ENCODE measurements at regions of chr1 and their contacts with region 1.

Region 1: DNA sequence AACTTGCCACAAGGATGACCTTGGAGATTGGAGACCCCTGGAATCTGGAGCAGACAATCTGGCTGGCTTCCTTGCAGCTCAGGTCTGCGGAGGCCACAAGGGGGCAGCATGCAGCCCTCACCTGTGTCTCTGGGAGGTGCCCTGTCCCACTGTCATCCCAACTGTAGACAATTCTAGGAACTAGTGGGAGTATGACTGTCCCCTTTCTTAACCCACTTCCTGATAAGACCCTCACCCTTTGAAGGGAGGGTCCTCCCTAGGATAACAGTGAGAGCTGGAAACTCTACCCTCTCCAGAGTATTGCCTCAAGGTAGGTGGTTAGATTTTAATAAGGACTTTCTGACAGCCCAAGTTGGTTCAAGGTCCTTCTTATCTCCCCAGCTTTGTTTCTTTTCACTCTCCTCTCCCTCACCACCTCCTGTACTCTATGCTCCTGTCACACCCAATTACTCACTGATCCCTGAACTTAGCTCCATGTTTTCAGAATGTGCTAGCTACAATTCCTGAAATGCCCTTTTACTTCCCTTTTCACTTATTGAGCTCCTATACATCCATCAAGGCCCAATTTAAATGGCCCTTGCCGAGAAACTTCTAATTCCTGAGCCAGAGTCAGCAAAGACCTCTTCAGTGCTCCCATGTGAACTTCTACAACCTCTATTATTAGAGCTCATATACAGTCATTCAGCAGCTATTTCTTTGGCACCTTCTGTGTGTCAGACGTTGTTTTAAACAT is 9.2 kb upstream of the KCNQ4 start:
- DNase-seq: peak; percentile 82
- ATAC-seq: peak; percentile 87
- H3K4me3 Mint-ChIP-seq: no peak overlapping the region
- H3K27ac Mint-ChIP-seq: peak overlapping the region; percentile 39
- H3K4me1 Mint-ChIP-seq: peaks cover 3% of the 10 kb centered on the region
- H3K27me3 Mint-ChIP-seq: no peaks in the 10 kb centered on the region
- CTCF ChIP-seq: peak; percentile 87

Region 2: GRCh38 chr1:40638097-40639036 is 136.1 kb before region 1 on chr1:
- CTCF ChIA-PET with region 1: no interaction called
- POLR2A ChIA-PET with region 1: no interaction called
- intact Hi-C with region 1: no loop called
- DNase-seq: no peak
- ATAC-seq: no peak
- H3K4me3 Mint-ChIP-seq: no peak overlapping the region
- H3K27ac Mint-ChIP-seq: no peak overlapping the region
- H3K4me1 Mint-ChIP-seq: peaks cover 23% of the 10 kb centered on the region
- H3K27me3 Mint-ChIP-seq: no peaks in the 10 kb centered on the region
- CTCF ChIP-seq: no peak

Region 3: DNA sequence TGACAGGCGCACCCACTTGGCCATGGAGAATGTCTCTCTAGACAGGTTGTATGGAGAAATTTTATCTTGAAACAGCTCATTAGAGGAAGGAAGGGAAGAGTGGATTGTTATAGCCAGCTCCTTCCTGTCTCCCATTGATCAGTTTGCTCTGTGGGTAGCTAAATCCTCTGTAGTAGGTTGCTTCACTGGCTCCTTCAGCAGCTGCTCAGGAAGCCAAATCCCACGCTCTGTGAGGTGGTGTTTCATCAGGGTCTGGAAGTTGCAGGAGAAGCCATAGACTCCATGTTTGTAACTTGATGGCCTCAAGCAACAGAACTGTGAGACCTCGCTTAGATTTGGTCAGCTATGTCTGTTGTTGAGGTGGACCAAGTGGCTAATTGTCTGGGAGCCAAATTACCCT is 89.8 kb before region 1 on chr1:
- CTCF ChIA-PET with region 1: interaction called, 23 read pairs
- POLR2A ChIA-PET with region 1: no interaction called
- intact Hi-C with region 1: no loop called
- DNase-seq: no peak
- ATAC-seq: no peak
- H3K4me3 Mint-ChIP-seq: no peak overlapping the region
- H3K27ac Mint-ChIP-seq: no peak overlapping the region
- H3K4me1 Mint-ChIP-seq: peaks cover 2% of the 10 kb centered on the region
- H3K27me3 Mint-ChIP-seq: no peaks in the 10 kb centered on the region
- CTCF ChIP-seq: no peak

Region 4: GRCh38 chr1:40755067-40755466 is 19.4 kb before region 1 on chr1:
- CTCF ChIA-PET with region 1: interaction called, 90 read pairs
- POLR2A ChIA-PET with region 1: no interaction called
- intact Hi-C with region 1: no loop called
- DNase-seq: no peak
- ATAC-seq: no peak
- H3K4me3 Mint-ChIP-seq: no peak overlapping the region
- H3K27ac Mint-ChIP-seq: no peak overlapping the region
- H3K4me1 Mint-ChIP-seq: peaks cover 30% of the 10 kb centered on the region
- H3K27me3 Mint-ChIP-seq: no peaks in the 10 kb centered on the region
- CTCF ChIP-seq: no peak

Region 5: DNA sequence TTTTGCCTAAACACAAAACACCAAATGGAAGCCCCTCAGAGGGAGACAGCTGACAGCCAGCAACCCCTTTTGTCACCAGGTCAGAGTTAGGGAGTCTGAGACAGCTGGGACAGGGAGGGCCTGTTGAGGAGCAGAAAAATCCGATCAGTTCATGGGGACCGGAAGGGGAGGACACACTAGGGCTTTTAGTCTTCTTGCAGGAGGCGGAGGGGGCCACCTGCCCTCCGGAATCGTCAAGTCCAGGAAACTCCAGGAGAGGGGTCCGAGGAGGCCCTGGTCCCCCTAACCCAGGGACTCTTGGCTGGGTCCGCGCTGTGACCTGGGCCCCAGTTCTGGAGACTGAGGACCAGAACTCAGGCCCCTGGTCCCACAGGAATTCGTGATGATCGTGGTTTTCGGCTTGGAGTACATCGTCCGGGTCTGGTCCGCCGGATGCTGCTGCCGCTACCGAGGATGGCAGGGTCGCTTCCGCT is 43.4 kb after region 1 on chr1:
- CTCF ChIA-PET with region 1: interaction called, 14 read pairs
- POLR2A ChIA-PET with region 1: no interaction called
- intact Hi-C with region 1: no loop called
- DNase-seq: no peak
- ATAC-seq: no peak
- H3K4me3 Mint-ChIP-seq: peak overlapping the region; percentile 72
- H3K27ac Mint-ChIP-seq: peak overlapping the region; percentile 25
- H3K4me1 Mint-ChIP-seq: peaks cover 11% of the 10 kb centered on the region
- H3K27me3 Mint-ChIP-seq: peaks cover 3% of the 10 kb centered on the region
- CTCF ChIP-seq: no peak

Region 6: GRCh38 chr1:40849801-40850592 is 75.6 kb after region 1 on chr1:
- CTCF ChIA-PET with region 1: interaction called, 169 read pairs
- POLR2A ChIA-PET with region 1: interaction called, 9 read pairs
- intact Hi-C with region 1: loop called (anchors 2 kb)
- DNase-seq: peak; percentile 85
- ATAC-seq: peak; percentile 92
- H3K4me3 Mint-ChIP-seq: peak overlapping the region; percentile 22
- H3K27ac Mint-ChIP-seq: peak overlapping the region; percentile 49
- H3K4me1 Mint-ChIP-seq: peaks cover 12% of the 10 kb centered on the region
- H3K27me3 Mint-ChIP-seq: no peaks in the 10 kb centered on the region
- CTCF ChIP-seq: peak; percentile 86

Region 7: GRCh38 chr1:40919475-40920011 is 145.1 kb after region 1 on chr1:
- CTCF ChIA-PET with region 1: no interaction called
- POLR2A ChIA-PET with region 1: no interaction called
- intact Hi-C with region 1: no loop called
- DNase-seq: no peak
- ATAC-seq: no peak
- H3K4me3 Mint-ChIP-seq: no peak overlapping the region
- H3K27ac Mint-ChIP-seq: no peak overlapping the region
- H3K4me1 Mint-ChIP-seq: no peaks in the 10 kb centered on the region
- H3K27me3 Mint-ChIP-seq: no peaks in the 10 kb centered on the region
- CTCF ChIP-seq: no peak